HCT116 (cell line): ENCODE measurements at regions of chr1 and their contacts with region 1.

Region 1: DNA sequence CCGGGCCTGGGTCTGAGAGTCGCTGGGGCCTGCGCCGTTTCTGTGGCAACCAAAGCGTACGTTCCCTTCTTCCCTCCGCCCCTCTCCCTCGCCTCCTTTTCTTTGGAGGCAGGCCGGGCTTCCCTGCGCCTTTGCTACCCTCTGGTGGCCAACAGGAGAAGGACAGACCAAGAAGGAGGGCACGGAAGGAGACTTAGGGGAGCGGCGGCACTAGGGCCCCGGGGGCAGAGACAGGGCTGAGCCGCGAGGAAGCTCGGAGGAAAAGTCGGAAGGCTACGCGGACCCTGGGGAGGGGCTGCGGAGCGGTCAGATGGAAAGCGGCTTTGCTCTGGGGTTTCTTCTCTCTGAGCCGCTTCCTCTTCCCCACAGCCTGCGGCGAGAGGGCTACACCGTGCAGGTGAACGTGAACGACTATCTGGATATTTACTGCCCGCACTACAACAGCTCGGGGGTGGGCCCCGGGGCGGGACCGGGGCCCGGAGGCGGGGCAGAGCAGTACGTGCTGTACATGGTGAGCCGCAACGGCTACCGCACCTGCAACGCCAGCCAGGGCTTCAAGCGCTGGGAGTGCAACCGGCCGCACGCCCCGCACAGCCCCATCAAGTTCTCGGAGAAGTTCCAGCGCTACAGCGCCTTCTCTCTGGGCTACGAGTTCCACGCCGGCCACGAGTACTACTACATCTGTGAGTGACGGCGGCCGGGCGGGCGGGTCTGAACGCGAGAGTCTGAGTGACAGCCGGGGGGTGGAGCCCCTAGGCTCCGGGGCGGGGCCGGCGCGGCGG is 6.3 kb downstream of the EFNA3 start:
- DNase-seq: peak; percentile 88
- ATAC-seq: peak; percentile 81
- H3K4me3 ChIP-seq: peak overlapping the region; percentile 61 to 67
- H3K27ac ChIP-seq: peak overlapping the region; percentile 67
- H3K4me1 ChIP-seq: peaks cover 29 to 60% of the 10 kb centered on the region in 2 experiments
- H3K27me3 ChIP-seq: no peaks in the 10 kb centered on the region
- CTCF ChIP-seq: peak in 2 of 3 experiments; percentile 86 to 87; a peak in 4 of 6 replicates
- POLR2A ChIP-seq: no peak
- RAD21 ChIP-seq: no peak

Region 2: DNA sequence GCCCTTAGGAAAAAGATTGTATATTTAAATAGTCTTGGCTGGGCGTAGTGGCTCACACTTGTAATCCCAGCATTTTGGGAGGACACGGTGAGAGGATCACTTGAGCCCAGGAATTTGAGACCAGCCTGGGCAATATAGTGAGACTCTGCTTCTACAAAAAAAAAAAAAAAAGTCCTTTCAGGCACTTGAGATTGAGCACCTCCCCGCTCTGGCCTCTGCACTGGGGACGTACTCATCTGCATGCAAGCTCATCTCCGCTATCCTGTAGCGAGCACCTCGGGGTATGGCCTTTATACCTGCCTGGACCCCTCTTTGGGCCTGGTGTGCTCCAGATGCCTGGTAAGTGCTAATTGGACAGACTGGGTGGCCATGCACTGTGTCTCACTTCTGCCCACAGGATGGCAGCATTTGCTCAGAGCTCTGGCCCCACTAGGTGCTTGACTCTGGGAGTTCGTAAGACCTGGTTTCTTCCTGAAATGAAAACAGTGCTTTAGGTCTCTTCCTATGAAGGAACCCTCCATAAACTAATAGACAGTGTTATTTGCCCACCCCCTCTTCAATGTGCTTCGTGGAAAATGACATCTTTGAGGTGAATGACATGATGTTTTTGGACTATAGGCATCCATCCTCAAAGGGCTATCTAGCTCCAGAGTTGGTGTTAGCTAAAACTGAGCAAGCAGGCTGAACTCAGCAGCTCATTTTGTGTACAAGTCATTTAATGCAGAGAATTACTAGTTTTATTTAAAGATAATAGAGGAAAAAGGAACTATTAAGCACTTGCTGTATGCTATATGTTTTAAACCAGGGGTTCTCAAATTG is 415.2 kb before region 1 on chr1:
- CTCF ChIA-PET with region 1: no interaction called
- POLR2A ChIA-PET with region 1: no interaction called
- RAD21 ChIA-PET with region 1: no interaction called
- intact Hi-C with region 1: loop called (anchors 1 kb)
- DNase-seq: peak; percentile 67
- ATAC-seq: peak; percentile 100
- H3K4me3 ChIP-seq: no peak overlapping the region
- H3K27ac ChIP-seq: no peak overlapping the region
- H3K4me1 ChIP-seq: peaks cover 0 to 3% of the 10 kb centered on the region in 2 experiments; a peak in 1 of 4 replicates
- H3K27me3 ChIP-seq: no peaks in the 10 kb centered on the region
- CTCF ChIP-seq: peak; percentile 86 to 95 (median 93)
- POLR2A ChIP-seq: no peak
- RAD21 ChIP-seq: peak; percentile 98

Region 3: DNA sequence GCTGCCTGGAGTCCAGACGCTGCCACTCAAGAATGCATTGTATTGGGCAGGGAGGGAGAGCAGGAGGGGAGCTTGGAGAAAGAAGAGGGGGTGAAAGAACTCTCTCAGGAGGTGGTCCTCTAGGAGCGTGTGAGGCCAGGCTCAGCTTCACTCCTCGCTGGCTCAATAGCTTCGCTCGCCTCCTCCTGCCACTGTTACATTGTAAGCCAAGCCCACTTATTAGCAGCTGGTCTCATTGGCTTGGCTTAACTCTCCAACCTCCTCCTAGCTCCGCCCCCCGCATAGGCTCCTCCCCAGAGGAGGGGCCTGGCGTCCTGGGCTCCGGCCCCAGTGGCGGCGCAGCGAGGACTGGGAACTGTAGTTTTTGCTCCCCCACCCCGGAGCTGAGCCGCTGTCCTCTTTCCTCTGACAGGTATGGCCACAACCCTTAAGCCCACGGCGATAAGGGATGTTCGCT is 214.8 kb before region 1 on chr1 and contains the start of gene KCNN3:
- CTCF ChIA-PET with region 1: no interaction called
- POLR2A ChIA-PET with region 1: no interaction called
- RAD21 ChIA-PET with region 1: no interaction called
- intact Hi-C with region 1: no loop called
- DNase-seq: peak; percentile 83
- ATAC-seq: peak; percentile 100
- H3K4me3 ChIP-seq: peak within 1 kb of the TSS; percentile 36 to 58
- H3K27ac ChIP-seq: no peak within 1 kb of the TSS
- H3K4me1 ChIP-seq: peaks cover 0 to 11% of the 10 kb centered on the region in 2 experiments; a peak in 3 of 4 replicates
- H3K27me3 ChIP-seq: peaks cover 4% of the 10 kb centered on the region; the same call in 1 of the 2 replicates
- CTCF ChIP-seq: no peak
- POLR2A ChIP-seq: no peak
- RAD21 ChIP-seq: no peak
- total RNA-seq, gene KCNN3: 1.1 TPM

Region 4: DNA sequence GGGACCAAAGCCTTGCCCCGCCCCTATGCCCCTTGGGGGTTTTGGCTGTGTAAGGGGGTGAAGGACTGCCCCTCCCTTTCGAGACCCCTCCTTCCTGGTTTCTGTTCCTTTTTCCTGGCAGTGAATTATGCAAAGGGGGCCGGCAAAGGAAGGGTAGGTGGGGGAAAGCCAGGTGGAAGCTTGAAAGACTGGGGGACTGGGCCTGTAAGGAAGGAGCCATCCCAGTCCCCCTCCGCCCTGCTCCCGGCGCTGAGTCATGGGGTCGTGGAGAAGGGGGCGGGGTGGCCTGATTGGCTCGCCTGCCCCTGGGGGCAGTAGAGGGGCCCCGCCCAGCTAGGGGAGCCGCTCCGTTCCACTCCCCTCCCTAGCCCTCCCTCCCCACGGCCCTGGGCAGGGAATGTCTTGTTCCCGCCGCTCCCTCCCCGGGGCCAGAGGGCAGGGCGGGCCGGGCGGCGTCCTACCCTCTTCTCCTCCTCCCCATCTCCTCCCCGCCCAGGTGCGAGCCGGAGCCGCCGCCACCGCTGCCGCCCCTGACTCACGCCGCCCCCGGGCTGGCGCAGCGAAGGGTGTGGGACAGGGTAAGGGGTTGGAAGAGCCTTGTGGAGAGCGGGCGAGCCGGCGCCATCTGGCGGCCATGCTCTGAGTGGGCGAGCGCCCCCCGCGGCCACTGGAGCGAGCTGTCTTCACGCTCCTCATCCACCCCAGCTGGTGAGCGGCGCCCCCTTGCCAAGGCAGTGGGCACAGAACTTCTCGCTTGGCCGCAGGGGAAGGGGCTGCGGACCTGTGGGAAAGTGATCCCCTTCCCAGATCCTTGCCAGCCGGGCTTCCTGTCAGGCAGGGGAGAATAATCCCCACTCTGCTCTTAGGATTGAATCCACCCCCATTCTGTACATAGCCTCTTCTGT is 67.6 kb before region 1 on chr1:
- CTCF ChIA-PET with region 1: interaction called, 11 read pairs
- POLR2A ChIA-PET with region 1: interaction called, 3 read pairs
- RAD21 ChIA-PET with region 1: no interaction called
- intact Hi-C with region 1: loop called (anchors 2 kb)
- DNase-seq: peak; percentile 87
- ATAC-seq: peak; percentile 86
- H3K4me3 ChIP-seq: peak overlapping the region; percentile 27 to 47
- H3K27ac ChIP-seq: peak overlapping the region; percentile 89
- H3K4me1 ChIP-seq: peaks cover 30 to 62% of the 10 kb centered on the region in 2 experiments
- H3K27me3 ChIP-seq: no peaks in the 10 kb centered on the region
- CTCF ChIP-seq: peak; percentile 99 to 100 (median 100)
- POLR2A ChIP-seq: no peak
- RAD21 ChIP-seq: peak; percentile 86

Region 5: DNA sequence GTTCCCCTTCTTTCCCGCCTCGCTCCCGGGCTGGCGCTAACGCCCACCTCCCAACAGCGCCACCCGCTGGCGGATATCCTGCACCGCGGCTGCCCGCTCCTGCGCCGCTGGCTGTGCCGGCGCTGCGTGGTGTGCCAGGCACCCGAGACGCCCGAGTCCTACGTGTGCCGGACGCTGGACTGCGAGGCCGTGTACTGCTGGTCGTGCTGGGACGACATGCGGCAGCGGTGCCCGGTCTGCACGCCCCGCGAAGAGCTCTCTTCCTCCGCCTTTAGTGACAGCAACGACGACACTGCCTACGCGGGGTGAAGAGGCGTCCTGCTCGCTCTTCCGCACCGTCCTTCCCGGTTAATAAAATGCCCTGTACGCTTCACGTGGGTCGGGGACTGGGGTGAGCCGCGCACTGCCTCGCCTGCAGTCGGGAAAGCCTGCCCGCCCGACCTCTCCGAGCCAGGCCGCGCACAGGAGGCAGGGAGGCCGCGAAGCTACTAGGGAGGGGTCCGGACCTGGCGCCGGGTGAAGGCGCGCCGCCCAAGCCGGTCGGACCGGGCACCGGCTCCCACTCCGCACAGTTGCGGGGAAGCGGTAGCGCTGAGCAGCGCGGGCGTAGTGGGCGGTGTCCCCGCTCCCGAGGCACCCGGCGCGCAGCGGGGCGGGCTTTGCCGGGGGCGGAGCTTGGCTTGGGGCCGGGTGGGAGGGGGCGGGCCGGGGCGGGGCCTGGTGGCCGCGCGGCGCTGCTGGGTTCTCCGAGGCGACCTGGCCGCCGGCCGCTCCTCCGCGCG is 34.2 kb before region 1 on chr1 and contains the start of gene ADAM15:
- CTCF ChIA-PET with region 1: interaction called, 32 read pairs
- POLR2A ChIA-PET with region 1: no interaction called
- RAD21 ChIA-PET with region 1: interaction called in 1 of 2 experiments, 3 read pairs
- intact Hi-C with region 1: loop called (anchors 1 kb)
- DNase-seq: peak; percentile 54
- ATAC-seq: peak; percentile 78
- H3K4me3 ChIP-seq: peak within 1 kb of the TSS; percentile 90 to 94
- H3K27ac ChIP-seq: peak within 1 kb of the TSS; percentile 93
- H3K4me1 ChIP-seq: peaks cover 13 to 41% of the 10 kb centered on the region in 2 experiments
- H3K27me3 ChIP-seq: no peaks in the 10 kb centered on the region
- CTCF ChIP-seq: peak in 2 of 3 experiments; percentile 93 to 94; a peak in 4 of 6 replicates
- POLR2A ChIP-seq: no peak
- RAD21 ChIP-seq: no peak
- total RNA-seq, gene ADAM15: 149 TPM

Region 6: GRCh38 chr1:155070721-155071569 is 14.0 kb before region 1 on chr1:
- CTCF ChIA-PET with region 1: interaction called, 44 read pairs
- POLR2A ChIA-PET with region 1: interaction called, 3 read pairs
- RAD21 ChIA-PET with region 1: no interaction called
- intact Hi-C with region 1: loop called (anchors 2 kb)
- DNase-seq: no peak
- ATAC-seq: peak; percentile 96
- H3K4me3 ChIP-seq: peak overlapping the region; percentile 30 to 45
- H3K27ac ChIP-seq: no peak overlapping the region
- H3K4me1 ChIP-seq: peaks cover 12 to 23% of the 10 kb centered on the region in 2 experiments
- H3K27me3 ChIP-seq: no peaks in the 10 kb centered on the region
- CTCF ChIP-seq: peak in 2 of 3 experiments; percentile 42 to 61; a peak in 4 of 6 replicates
- POLR2A ChIP-seq: no peak
- RAD21 ChIP-seq: no peak

Region 7: GRCh38 chr1:155172732-155173477 is 88.0 kb after region 1 on chr1 and contains the start of gene KRTCAP2:
- CTCF ChIA-PET with region 1: interaction called, 163 read pairs
- POLR2A ChIA-PET with region 1: interaction called, 7 read pairs
- RAD21 ChIA-PET with region 1: interaction called, 5 to 7 read pairs
- intact Hi-C with region 1: no loop called
- DNase-seq: peak; percentile 91
- ATAC-seq: peak; percentile 76
- H3K4me3 ChIP-seq: peak within 1 kb of the TSS; percentile 84 to 97
- H3K27ac ChIP-seq: peak within 1 kb of the TSS; percentile 76
- H3K4me1 ChIP-seq: peaks cover 7 to 45% of the 10 kb centered on the region in 2 experiments; a peak in 3 of 4 replicates
- H3K27me3 ChIP-seq: no peaks in the 10 kb centered on the region
- CTCF ChIP-seq: peak in 2 of 3 experiments; percentile 90 to 92; a peak in 4 of 6 replicates
- POLR2A ChIP-seq: peak; percentile 48
- RAD21 ChIP-seq: no peak
- total RNA-seq, gene KRTCAP2: 143 TPM

Region 8: DNA sequence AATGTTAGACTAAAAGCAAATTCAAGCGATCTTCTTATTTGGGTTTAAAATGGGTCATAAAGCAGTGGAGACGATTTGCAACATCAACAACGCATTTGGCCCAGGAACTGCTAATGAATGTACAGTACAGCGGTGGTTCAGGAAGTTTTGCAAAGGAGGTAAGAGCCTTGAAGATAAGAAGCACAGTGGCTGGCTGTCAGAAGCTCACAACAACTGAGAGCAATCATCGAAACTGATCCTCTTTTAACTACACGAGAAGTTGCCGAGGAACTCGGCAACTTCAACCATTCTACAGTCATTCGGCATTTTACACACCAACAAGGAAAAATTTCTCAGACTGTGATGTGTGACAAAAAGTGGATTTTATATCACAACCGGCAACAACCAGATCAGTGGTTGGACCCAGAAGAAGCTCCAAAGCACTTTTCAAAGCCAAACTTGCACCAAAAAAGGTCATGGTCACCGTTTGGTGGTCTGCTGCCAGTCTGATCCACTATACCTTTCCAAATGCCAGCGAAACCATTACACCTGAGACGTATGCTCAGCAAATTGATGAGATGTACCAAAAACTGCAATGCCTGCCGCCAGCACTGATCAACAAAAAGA is 429.8 kb after region 1 on chr1:
- CTCF ChIA-PET with region 1: no interaction called
- POLR2A ChIA-PET with region 1: no interaction called
- RAD21 ChIA-PET with region 1: no interaction called
- intact Hi-C with region 1: no loop called
- DNase-seq: no peak
- ATAC-seq: no peak
- H3K4me3 ChIP-seq: no peak overlapping the region
- H3K27ac ChIP-seq: no peak overlapping the region
- H3K4me1 ChIP-seq: peaks cover 0 to 8% of the 10 kb centered on the region in 2 experiments; a peak in 1 of 4 replicates
- H3K27me3 ChIP-seq: no peaks in the 10 kb centered on the region
- CTCF ChIP-seq: no peak
- POLR2A ChIP-seq: no peak
- RAD21 ChIP-seq: no peak